Activated CD8-positive, alpha-beta T cell treated with anti-CD3 and anti-CD28 coated beads, Interleukin-2, amount 10 ng/mL, durations not matched to agents 7 days and 5 days (primary cell): ENCODE measurements at regions of chr7 and their contacts with region 1.

Region 1: GRCh38 chr7:31419505-31420055 is 79.1 kb upstream of the NEUROD6 start:
- DNase-seq: no peak
- ATAC-seq: no peak
- H3K4me3 Mint-ChIP-seq: no peak overlapping the region
- H3K27ac Mint-ChIP-seq: no peak overlapping the region
- H3K4me1 Mint-ChIP-seq: no peaks in the 10 kb centered on the region
- H3K27me3 Mint-ChIP-seq: no peaks in the 10 kb centered on the region

Region 2: GRCh38 chr7:31443457-31443856 is 23.9 kb after region 1 on chr7:
- CTCF ChIA-PET with region 1: interaction called, 10 read pairs
- POLR2A ChIA-PET with region 1: no interaction called
- DNase-seq: peak; percentile 21
- ATAC-seq: no peak
- H3K4me3 Mint-ChIP-seq: no peak overlapping the region
- H3K27ac Mint-ChIP-seq: no peak overlapping the region
- H3K4me1 Mint-ChIP-seq: no peaks in the 10 kb centered on the region
- H3K27me3 Mint-ChIP-seq: no peaks in the 10 kb centered on the region